ENCODE measurements at regions of chr13 and their contacts with region 1.

Region 1: GRCh38 chr13:77429320-77430142 is 102.6 kb upstream of the MYCBP2 start:
- DNase-seq: no peak
- ATAC-seq: no peak
- H3K4me3 ChIP-seq: no peak overlapping the region
- H3K27ac ChIP-seq: no peak overlapping the region
- H3K4me1 ChIP-seq: no peaks in the 10 kb centered on the region
- H3K27me3 ChIP-seq: no peaks in the 10 kb centered on the region
- CTCF ChIP-seq: no peak
- POLR2A ChIP-seq: no peak
- RAD21 ChIP-seq: no peak

Region 2: DNA sequence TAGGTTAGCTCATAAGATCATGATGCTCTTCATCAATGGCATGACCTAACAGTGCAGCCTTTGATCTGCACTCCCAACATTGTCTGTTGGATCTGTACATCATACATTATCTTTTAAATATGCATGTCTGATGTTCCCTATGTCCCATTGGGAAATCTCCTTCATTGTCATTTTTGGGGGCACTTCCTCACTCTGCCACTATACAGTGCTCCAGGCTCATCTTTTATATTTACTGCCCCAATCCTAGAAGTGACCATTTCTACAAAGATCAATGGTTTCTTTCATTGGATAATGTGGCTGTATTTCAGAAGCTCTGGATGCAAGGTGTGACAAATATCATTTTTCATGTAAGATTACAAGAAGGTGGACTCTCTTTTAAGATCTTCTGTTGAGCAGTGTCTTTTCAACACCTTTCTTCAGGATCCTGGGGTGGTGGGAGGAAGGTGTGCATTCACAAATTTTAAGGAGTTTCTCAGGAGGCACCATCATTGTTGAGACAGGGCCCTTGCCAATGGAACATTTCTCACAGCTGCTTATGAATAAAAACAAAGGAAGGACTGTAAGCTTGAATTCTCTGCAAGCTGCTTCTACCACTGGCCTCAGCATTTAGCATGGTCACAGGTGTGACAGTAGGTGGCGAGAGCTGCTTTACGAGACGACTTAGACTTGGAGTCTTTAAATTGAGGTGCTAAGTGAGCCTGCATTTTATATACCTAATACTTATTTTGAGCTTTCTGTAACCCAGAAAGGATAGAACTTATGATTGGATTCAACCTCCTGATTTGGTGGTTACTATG is 1390.4 kb before region 1 on chr13:
- CTCF ChIA-PET with region 1: no interaction called
- POLR2A ChIA-PET with region 1: interaction called, 10 read pairs
- dilution Hi-C with region 1: no loop called
- in situ Hi-C with region 1: no loop called
- intact Hi-C with region 1: no loop called
- DNase-seq: no peak
- ATAC-seq: no peak
- H3K4me3 ChIP-seq: no peak overlapping the region
- H3K27ac ChIP-seq: no peak overlapping the region
- H3K4me1 ChIP-seq: peaks cover 12% of the 10 kb centered on the region
- H3K27me3 ChIP-seq: no peaks in the 10 kb centered on the region
- CTCF ChIP-seq: no peak
- POLR2A ChIP-seq: no peak
- RAD21 ChIP-seq: no peak

Region 3: GRCh38 chr13:77412116-77412635 is 17.4 kb before region 1 on chr13:
- CTCF ChIA-PET with region 1: no interaction called
- POLR2A ChIA-PET with region 1: no interaction called
- dilution Hi-C with region 1: no loop called
- in situ Hi-C with region 1: no loop called
- intact Hi-C with region 1: no loop called
- DNase-seq: no peak
- ATAC-seq: no peak
- H3K4me3 ChIP-seq: no peak overlapping the region
- H3K27ac ChIP-seq: no peak overlapping the region
- H3K4me1 ChIP-seq: no peaks in the 10 kb centered on the region
- H3K27me3 ChIP-seq: peaks cover 1% of the 10 kb centered on the region
- CTCF ChIP-seq: no peak
- POLR2A ChIP-seq: no peak
- RAD21 ChIP-seq: no peak